Sigmoid colon (tissue), 7 donors: ENCODE measurements at regions of chrX and their contacts with region 1.

Region 1: DNA sequence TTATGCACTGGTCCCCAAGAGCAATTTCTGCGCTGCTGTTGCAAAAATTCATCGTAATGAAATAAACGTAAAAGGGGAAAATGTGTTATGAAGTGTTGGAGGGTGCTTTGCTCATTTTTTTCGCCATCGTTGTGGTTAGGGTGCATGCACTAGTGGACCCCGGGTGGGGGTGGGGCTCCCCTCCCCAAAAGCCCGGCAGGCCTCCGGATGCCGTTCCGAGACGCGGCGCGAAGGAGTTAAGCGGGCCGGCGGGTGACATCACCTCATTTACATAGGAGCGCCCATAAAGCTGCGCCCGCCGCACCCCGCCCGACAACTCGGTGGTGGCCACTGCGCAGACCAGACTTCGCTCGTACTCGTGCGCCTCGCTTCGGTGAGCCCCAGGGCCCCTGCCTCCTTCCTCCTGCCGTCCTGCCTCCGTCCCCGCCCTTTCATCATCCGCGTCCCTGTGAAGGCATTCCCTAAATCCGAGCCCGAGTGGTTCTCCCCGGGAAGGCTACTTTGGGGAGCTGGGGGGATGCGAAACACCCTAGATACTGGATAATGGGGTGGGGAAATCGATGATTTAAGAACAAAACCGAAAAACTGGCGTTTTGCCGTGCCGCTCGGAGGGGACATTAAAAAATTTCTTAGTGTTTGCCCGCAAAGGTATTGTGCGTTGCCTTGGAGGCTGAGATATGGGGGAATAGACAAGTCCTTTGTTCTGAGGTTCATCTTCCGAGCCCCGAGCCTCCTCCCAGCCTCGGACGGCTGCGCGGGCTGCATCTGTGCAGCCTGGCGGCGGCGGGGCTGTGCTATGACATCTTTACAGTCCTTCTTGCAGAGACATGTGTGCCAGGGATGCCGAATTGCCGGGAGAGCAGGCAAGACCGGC is at the start of gene TMSB4X:
- DNase-seq: peak; percentile 93
- H3K4me3 ChIP-seq: peak within 1 kb of the TSS; percentile 57 to 73 (median 68)
- H3K27ac ChIP-seq: peak within 1 kb of the TSS; percentile 87 to 92 (median 90)
- H3K4me1 ChIP-seq: no peaks in the 10 kb centered on the region
- H3K27me3 ChIP-seq: peaks cover 0 to 3% (median 0%) of the 10 kb centered on the region in 3 donors
- CTCF ChIP-seq: no peak
- EP300 ChIP-seq: no peak
- POLR2A ChIP-seq: peak; percentile 91 to 96
- total RNA-seq, gene TMSB4X: 1,233 to 1,969 (median 1,534) TPM

Region 2: GRCh38 chrX:12936947-12937346 is 38.1 kb before region 1 on chrX:
- intact Hi-C with region 1: no loop called
- DNase-seq: no peak
- H3K4me3 ChIP-seq: no peak overlapping the region
- H3K27ac ChIP-seq: no peak overlapping the region
- H3K4me1 ChIP-seq: no peaks in the 10 kb centered on the region
- H3K27me3 ChIP-seq: no peaks in the 10 kb centered on the region
- CTCF ChIP-seq: no peak
- EP300 ChIP-seq: no peak
- POLR2A ChIP-seq: no peak

Region 3: GRCh38 chrX:13087322-13088155 is 112.5 kb after region 1 on chrX:
- intact Hi-C with region 1: loop called (anchors 10 kb)
- DNase-seq: no peak
- H3K4me3 ChIP-seq: no peak overlapping the region
- H3K27ac ChIP-seq: no peak overlapping the region
- H3K4me1 ChIP-seq: no peaks in the 10 kb centered on the region
- H3K27me3 ChIP-seq: no peaks in the 10 kb centered on the region
- CTCF ChIP-seq: no peak
- EP300 ChIP-seq: no peak
- POLR2A ChIP-seq: no peak

Region 4: DNA sequence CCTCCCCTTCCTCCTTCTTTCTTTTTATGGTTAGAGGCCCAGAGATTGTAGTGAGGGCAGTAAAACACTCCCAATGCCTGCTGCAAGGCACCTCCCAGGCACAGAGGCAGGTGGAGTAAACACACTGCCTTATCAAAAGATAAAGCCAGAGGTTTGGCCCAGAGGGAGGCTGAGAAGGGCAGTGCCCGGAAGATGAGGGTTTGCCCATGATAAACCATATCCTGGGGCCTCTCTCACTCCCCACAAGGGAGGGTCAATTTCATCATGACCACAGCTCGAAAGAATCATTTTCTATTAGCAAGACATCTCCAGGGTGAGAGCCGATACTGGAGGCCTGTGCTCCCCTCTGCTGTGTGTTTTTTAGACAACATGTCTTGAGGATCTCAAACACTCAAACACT is 167.9 kb after region 1 on chrX:
- intact Hi-C with region 1: no loop called
- DNase-seq: no peak
- H3K4me3 ChIP-seq: no peak overlapping the region
- H3K27ac ChIP-seq: no peak overlapping the region
- H3K4me1 ChIP-seq: no peaks in the 10 kb centered on the region
- H3K27me3 ChIP-seq: no peaks in the 10 kb centered on the region
- CTCF ChIP-seq: no peak
- EP300 ChIP-seq: no peak
- POLR2A ChIP-seq: no peak

Region 5: GRCh38 chrX:13432414-13433297 is 457.6 kb after region 1 on chrX:
- intact Hi-C with region 1: loop called (anchors 5 kb)
- DNase-seq: peak; percentile 86
- H3K4me3 ChIP-seq: no peak overlapping the region
- H3K27ac ChIP-seq: peak overlapping the region; percentile 61 to 81 (median 73)
- H3K4me1 ChIP-seq: peaks cover 0 to 15% (median 9%) of the 10 kb centered on the region in 4 donors
- H3K27me3 ChIP-seq: no peaks in the 10 kb centered on the region
- CTCF ChIP-seq: no peak
- EP300 ChIP-seq: peak; percentile 35 to 86 (median 54)
- POLR2A ChIP-seq: no peak

Region 6: DNA sequence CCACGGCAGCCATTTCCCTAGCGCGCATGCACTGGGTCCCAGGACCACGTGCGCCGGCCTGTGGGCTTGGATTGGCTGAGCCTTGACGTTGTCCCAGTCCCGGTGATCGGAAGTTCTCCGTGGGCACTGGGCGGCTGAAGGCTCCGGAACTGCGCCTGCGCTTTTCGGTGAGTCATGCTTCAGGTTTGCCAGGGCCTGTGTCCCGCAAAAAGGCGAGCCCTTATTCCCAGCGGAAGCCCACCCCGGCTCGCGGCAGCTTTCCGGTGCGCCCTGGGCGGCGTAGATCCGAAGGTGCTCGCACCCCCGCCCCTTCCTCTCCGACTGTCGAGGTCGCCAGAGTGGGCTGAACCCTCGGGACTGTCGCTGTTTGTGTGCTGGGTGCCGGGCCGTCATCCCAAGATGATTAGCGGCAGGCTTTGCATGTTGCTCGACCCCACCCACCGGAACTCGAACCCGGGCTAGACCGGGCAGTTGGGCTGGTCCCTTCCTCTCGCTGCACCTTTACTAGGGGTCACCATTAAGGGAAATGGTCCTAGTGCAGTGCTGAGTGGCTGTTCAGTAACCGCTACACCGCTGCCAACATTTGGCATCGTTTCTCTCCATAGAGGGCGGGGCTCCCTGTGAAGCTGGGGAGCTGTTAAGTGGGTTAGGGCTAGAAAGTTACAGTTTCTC is 678.1 kb after region 1 on chrX and contains the start of gene TCEANC:
- intact Hi-C with region 1: loop called (anchors 10 kb)
- DNase-seq: peak; percentile 99
- H3K4me3 ChIP-seq: peak within 1 kb of the TSS; percentile 54 to 66 (median 62)
- H3K27ac ChIP-seq: peak within 1 kb of the TSS; percentile 90 to 96 (median 94)
- H3K4me1 ChIP-seq: peaks cover 0 to 20% (median 9%) of the 10 kb centered on the region in 4 donors
- H3K27me3 ChIP-seq: no peaks in the 10 kb centered on the region
- CTCF ChIP-seq: no peak
- EP300 ChIP-seq: no peak
- POLR2A ChIP-seq: peak; percentile 46 to 58
- total RNA-seq, gene TCEANC: 2.6 to 8.7 (median 6.2) TPM